Thyroid gland (tissue), 4 donors: ENCODE measurements at regions of chr3 and their contacts with region 1.

Region 1: GRCh38 chr3:98039322-98040024 is 4.4 kb upstream of the GABRR3 start:
- DNase-seq: peak; percentile 49 to 59
- H3K4me3 ChIP-seq: peak overlapping the region in 1 of 3 donors; percentile 13
- H3K27ac ChIP-seq: no peak overlapping the region
- H3K4me1 ChIP-seq: peaks cover 0 to 3% of the 10 kb centered on the region in 2 donors
- H3K27me3 ChIP-seq: peaks cover 4% of the 10 kb centered on the region
- CTCF ChIP-seq: peak; percentile 67 to 98 (median 80)
- POLR2A ChIP-seq: no peak

Region 2: GRCh38 chr3:98329392-98330124 is 290.1 kb after region 1 on chr3:
- intact Hi-C with region 1: loop called (anchors 5 kb)
- DNase-seq: peak; percentile 46 to 51
- H3K4me3 ChIP-seq: no peak overlapping the region
- H3K27ac ChIP-seq: no peak overlapping the region
- H3K4me1 ChIP-seq: peaks cover 0 to 7% of the 10 kb centered on the region in 2 donors
- H3K27me3 ChIP-seq: no peaks in the 10 kb centered on the region
- CTCF ChIP-seq: peak in 5 of 6 experiments; percentile 55 to 75 (median 63)
- POLR2A ChIP-seq: no peak